Mammary epithelial cell (primary cell): ENCODE measurements at regions of chrX and their contacts with region 1.

Region 1: DNA sequence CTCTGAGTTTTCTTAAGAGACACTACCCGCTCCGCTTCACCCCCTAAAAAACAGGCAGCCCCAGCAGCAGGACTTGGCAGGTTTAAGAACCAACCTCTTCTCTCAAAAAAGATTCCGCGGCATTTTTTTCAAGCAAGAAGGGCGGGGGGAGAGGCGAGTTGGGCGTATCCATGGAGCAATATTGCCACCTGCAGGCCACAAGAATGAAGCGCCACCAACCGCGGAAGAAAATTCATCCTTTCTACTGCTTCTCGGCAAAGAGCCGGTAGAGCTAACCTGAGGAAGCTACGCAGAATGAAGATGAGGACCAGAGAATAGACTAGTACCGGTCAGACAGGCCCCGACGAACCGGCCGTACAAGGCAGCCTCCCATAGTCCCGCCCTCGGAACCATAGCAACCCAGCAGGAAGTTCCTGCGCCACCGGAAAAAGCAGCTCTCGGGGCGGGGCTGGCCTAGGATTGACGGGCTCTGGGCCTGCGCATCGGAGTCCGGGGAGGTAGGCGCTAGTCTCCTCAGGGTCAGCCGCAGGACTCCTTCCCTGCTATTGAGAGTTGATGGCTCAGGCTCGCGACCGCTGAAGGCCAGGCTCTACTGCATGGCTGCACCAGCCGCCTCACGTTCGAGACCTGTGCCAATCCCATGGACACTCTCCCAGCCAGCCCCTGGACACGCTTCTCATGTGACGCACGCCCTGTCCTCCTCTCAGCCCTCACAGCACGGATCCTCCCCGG is 76.9 kb downstream of the MAGED4 start:
- DNase-seq: peak; percentile 80
- H3K4me3 ChIP-seq: peak overlapping the region; percentile 61 to 68 (median 67)
- H3K27ac ChIP-seq: peak overlapping the region; percentile 46
- H3K4me1 ChIP-seq: peaks cover 11% of the 10 kb centered on the region
- H3K27me3 ChIP-seq: no peaks in the 10 kb centered on the region
- CTCF ChIP-seq: peak; percentile 91 to 92

Region 2: DNA sequence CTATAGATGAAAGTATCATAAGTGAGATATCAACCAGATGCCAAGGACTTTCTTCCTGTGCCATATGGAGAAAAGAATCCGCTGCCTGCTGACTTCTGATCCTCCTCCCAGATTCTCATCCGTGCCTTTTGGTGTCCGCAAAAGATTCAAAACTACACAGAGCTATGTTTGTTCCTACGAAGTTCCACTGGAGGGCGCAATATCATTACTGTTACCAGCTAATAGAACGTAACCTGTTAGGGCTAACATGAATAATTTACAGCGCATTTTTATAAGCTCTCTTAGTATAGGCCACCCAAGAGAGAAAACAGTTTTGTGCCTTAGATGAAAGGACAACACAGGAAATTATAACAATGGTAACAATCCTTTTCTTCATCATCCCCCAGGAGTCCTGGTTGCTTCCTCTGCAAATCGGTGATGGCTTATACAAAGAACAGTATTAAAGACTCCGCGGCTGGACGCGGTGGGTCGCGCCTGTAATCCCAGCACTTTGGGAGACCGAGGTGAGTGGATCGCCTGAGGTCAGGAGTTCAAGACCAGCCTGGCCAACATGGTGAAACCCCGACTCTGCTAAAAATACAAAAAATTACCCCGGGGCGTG is 620.1 kb before region 1 on chrX:
- CTCF ChIA-PET with region 1: interaction called, 10 read pairs
- dilution Hi-C with region 1: no loop called
- in situ Hi-C with region 1: loop called in 1 of 2 experiments (anchors 25 kb)
- intact Hi-C with region 1: loop called (anchors 5 kb)
- DNase-seq: peak; percentile 19
- H3K4me3 ChIP-seq: no peak overlapping the region
- H3K27ac ChIP-seq: no peak overlapping the region
- H3K4me1 ChIP-seq: no peaks in the 10 kb centered on the region
- H3K27me3 ChIP-seq: peaks cover 3% of the 10 kb centered on the region
- CTCF ChIP-seq: peak; percentile 49 to 57